HEK293 (cell line): ENCODE measurements at regions of chr10 and their contacts with region 1.

Region 1: GRCh38 chr10:58291538-58292174 is 22.7 kb downstream of the CISD1 start:
- H3K4me3 ChIP-seq: no peak overlapping the region
- H3K27ac ChIP-seq: no peak overlapping the region
- H3K4me1 ChIP-seq: no peaks in the 10 kb centered on the region
- CTCF ChIP-seq: peak; percentile 58; the same call in 1 of the 2 replicates

Region 2: GRCh38 chr10:58065529-58065815 is 226.2 kb before region 1 on chr10:
- CTCF ChIA-PET with region 1: no interaction called
- POLR2A ChIA-PET with region 1: no interaction called
- H3K4me3 ChIP-seq: no peak overlapping the region
- H3K27ac ChIP-seq: no peak overlapping the region
- H3K4me1 ChIP-seq: no peaks in the 10 kb centered on the region
- CTCF ChIP-seq: no peak

Region 3: DNA sequence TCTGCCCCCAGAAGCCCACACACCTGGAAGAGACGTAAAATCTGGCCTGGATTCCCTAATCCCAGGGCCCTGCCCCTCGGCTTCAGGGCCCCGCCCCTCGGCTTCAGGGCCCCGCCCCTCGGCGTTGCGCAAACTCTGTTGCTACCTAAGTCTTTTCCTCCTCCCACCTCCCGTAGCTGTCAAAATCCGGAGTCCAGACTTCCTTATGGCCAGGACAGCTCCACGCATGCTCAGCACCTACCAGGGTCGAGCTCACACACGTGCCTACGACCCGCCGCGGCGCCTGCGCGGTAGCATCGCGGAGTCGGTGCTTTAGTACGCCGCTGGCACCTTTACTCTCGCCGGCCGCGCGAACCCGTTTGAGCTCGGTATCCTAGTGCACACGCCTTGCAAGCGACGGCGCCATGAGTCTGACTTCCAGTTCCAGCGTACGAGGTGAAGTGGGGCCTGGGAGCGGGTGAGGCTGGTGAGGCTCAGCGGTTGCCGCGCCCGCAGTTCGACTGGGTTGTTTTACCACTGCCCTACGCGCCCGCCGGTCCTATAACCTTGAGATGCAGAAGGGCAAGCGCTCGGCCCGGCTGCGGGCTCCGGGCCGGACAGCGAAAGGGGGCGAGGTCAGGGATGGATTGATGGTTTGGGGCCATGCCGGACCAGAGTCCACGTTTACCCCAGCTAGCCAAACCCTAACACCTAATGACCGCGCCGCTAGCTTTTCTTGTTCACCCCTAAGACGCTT is 22.6 kb before region 1 on chr10 and contains the start of gene CISD1:
- CTCF ChIA-PET with region 1: interaction called, 8 read pairs
- POLR2A ChIA-PET with region 1: interaction called, 12 read pairs
- H3K4me3 ChIP-seq: peak within 1 kb of the TSS; percentile 64
- H3K27ac ChIP-seq: peak within 1 kb of the TSS; percentile 94
- H3K4me1 ChIP-seq: peaks cover 5% of the 10 kb centered on the region; the same call in 1 of the 2 replicates
- CTCF ChIP-seq: no peak